Activated B cell treated with CpG ODN at 0.5 μM for 24 hours (primary cell): ENCODE measurements at regions of chr4 and their contacts with region 1.

Region 1: GRCh38 chr4:4995103-4995907 is 24.0 kb downstream of the CYTL1 start:
- DNase-seq: peak; percentile 42
- ATAC-seq: peak; percentile 52
- H3K4me3 Mint-ChIP-seq: no peak overlapping the region
- H3K27ac Mint-ChIP-seq: no peak overlapping the region
- H3K4me1 Mint-ChIP-seq: peaks cover 7% of the 10 kb centered on the region
- H3K27me3 Mint-ChIP-seq: peaks cover 14% of the 10 kb centered on the region
- CTCF ChIP-seq: peak; percentile 78

Region 2: DNA sequence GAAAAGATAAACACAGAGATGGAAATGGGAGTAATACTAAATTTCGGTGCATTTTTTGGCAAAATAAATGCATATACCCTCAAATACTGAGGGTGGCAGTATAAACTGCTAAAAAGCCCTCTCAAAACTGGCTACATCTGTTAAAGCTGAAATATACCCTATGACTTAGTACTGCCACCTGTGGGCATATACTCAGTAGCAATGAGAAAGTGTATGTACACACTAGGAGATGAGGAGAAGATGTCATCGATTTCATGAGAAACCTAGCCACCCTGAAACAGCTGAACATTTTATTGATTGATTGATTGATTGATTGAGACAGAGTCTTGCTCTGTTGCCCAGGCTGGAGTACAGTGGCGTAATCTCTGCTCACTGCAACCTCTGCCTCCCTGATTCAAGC is 735.1 kb before region 1 on chr4:
- CTCF ChIA-PET with region 1: no interaction called
- POLR2A ChIA-PET with region 1: no interaction called
- intact Hi-C with region 1: no loop called
- DNase-seq: no peak
- ATAC-seq: peak; percentile 77
- H3K4me3 Mint-ChIP-seq: no peak overlapping the region
- H3K27ac Mint-ChIP-seq: no peak overlapping the region
- H3K4me1 Mint-ChIP-seq: no peaks in the 10 kb centered on the region
- H3K27me3 Mint-ChIP-seq: peaks cover 3% of the 10 kb centered on the region
- CTCF ChIP-seq: no peak

Region 3: GRCh38 chr4:4901877-4902276 is 93.4 kb before region 1 on chr4:
- CTCF ChIA-PET with region 1: no interaction called
- POLR2A ChIA-PET with region 1: no interaction called
- intact Hi-C with region 1: loop called (anchors 1 kb)
- DNase-seq: no peak
- ATAC-seq: no peak
- H3K4me3 Mint-ChIP-seq: no peak overlapping the region
- H3K27ac Mint-ChIP-seq: no peak overlapping the region
- H3K4me1 Mint-ChIP-seq: peaks cover 10% of the 10 kb centered on the region
- H3K27me3 Mint-ChIP-seq: peaks cover 7% of the 10 kb centered on the region
- CTCF ChIP-seq: no peak

Region 4: GRCh38 chr4:5142726-5143125 is 147.4 kb after region 1 on chr4:
- CTCF ChIA-PET with region 1: no interaction called
- POLR2A ChIA-PET with region 1: no interaction called
- intact Hi-C with region 1: loop called (anchors 2 kb)
- DNase-seq: no peak
- ATAC-seq: no peak
- H3K4me3 Mint-ChIP-seq: no peak overlapping the region
- H3K27ac Mint-ChIP-seq: no peak overlapping the region
- H3K4me1 Mint-ChIP-seq: no peaks in the 10 kb centered on the region
- H3K27me3 Mint-ChIP-seq: no peaks in the 10 kb centered on the region
- CTCF ChIP-seq: no peak

Region 5: GRCh38 chr4:5812506-5813229 is 817.4 kb after region 1 on chr4:
- CTCF ChIA-PET with region 1: no interaction called
- POLR2A ChIA-PET with region 1: no interaction called
- intact Hi-C with region 1: loop called (anchors 2 kb)
- DNase-seq: no peak
- ATAC-seq: no peak
- H3K4me3 Mint-ChIP-seq: no peak overlapping the region
- H3K27ac Mint-ChIP-seq: no peak overlapping the region
- H3K4me1 Mint-ChIP-seq: no peaks in the 10 kb centered on the region
- H3K27me3 Mint-ChIP-seq: no peaks in the 10 kb centered on the region
- CTCF ChIP-seq: no peak